Caco-2 (cell line): ENCODE measurements at regions of chr7 and their contacts with region 1.

Region 1: DNA sequence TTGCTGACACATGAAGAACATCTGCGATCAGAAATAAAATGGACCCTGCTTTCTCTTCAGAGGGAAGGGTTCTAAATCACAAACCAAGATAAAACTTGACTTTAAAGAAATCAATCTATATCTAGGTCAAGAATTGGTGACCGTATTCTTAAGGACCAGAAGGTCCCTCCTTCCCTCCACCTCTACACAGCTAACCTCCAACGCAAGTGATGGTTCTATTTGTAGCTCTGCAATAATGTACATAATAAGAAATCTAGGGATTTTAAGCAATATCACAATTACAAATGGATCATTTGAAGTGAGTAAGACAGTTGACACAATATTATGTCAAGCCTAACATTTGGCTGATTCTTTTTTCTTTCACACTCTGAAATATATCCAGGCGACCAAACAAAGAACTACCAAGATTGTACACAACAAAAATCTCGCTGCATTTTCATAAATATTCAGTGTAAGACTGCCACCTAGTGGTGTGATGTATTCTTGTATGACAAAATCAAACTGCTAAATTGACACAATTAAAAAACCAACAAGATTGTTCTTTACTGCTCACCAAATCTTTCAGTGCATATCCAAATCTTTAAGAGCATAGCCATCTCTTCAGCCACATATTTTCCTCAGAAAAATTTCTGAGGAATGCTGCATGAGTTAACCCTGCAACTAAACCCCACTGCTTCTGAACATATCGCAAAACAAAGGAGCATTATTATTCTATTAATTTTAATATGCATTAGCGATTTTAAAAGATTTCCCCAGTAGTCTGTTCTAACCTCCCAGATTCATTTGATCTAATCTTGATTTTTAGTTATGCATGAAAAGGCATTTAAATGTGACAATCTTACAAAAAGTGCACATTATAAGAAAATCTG is 44.5 kb downstream of the ICA1 start:
- DNase-seq: peak in 1 of 2 experiments; percentile 59
- H3K4me3 ChIP-seq: no peak overlapping the region
- H3K4me3 Mint-ChIP-seq: no peak overlapping the region
- H3K27ac Mint-ChIP-seq: no peak overlapping the region
- H3K4me1 ChIP-seq: no peaks in the 10 kb centered on the region
- H3K4me1 Mint-ChIP-seq: peaks cover 4% of the 10 kb centered on the region
- H3K27me3 ChIP-seq: no peaks in the 10 kb centered on the region
- H3K27me3 Mint-ChIP-seq: no peaks in the 10 kb centered on the region
- CTCF ChIP-seq: peak; percentile 52 to 75

Region 2: DNA sequence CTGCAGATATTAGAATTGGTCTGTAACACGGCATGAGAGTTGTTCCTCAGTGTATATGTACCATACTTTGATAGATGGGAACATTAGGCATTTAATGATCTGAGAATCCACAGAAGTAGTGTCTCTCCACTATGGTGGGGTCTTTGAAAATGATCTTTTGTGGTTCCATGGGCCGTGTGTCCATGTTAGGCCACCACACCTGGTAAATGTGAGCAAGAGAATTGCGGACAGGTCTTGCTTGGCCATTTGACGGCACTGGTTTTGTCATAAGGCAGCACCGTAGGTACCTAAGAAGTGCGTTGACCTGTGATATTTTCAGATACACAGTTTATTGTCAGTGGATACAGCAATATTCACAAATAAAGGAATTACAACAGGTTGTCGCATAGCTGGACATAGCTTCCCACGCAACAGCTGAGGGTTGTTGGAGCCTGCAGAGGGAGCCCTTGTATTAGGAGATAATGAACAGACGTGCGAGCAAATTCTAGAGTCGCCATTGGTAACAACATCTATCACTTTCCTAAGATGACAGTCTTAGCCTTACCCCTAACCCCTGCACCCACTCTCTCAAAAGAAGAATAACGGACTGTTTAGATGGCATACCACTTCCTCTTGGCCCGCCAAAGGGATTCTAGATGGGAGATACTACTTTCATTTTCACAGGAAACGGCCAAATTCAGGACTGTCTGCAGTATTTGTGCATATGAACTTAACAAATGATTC is 793.1 kb before region 1 on chr7:
- CTCF ChIA-PET with region 1: no interaction called
- POLR2A ChIA-PET with region 1: no interaction called
- intact Hi-C with region 1: loop called (anchors 1 kb)
- DNase-seq: peak; percentile 62 to 75
- H3K4me3 ChIP-seq: no peak overlapping the region
- H3K4me3 Mint-ChIP-seq: no peak overlapping the region
- H3K27ac Mint-ChIP-seq: no peak overlapping the region
- H3K4me1 ChIP-seq: no peaks in the 10 kb centered on the region
- H3K4me1 Mint-ChIP-seq: no peaks in the 10 kb centered on the region
- H3K27me3 ChIP-seq: no peaks in the 10 kb centered on the region
- H3K27me3 Mint-ChIP-seq: no peaks in the 10 kb centered on the region
- CTCF ChIP-seq: peak; percentile 86 to 93

Region 3: GRCh38 chr7:7566651-7567611 is 650.5 kb before region 1 on chr7 and contains the start of gene MIOS:
- CTCF ChIA-PET with region 1: no interaction called
- POLR2A ChIA-PET with region 1: no interaction called
- intact Hi-C with region 1: loop called (anchors 10 kb)
- DNase-seq: peak; percentile 95 to 97
- H3K4me3 ChIP-seq: peak within 1 kb of the TSS; percentile 53
- H3K4me3 Mint-ChIP-seq: no peak within 1 kb of the TSS
- H3K27ac Mint-ChIP-seq: no peak within 1 kb of the TSS
- H3K4me1 ChIP-seq: peaks cover 34% of the 10 kb centered on the region
- H3K4me1 Mint-ChIP-seq: peaks cover 20% of the 10 kb centered on the region
- H3K27me3 ChIP-seq: no peaks in the 10 kb centered on the region
- H3K27me3 Mint-ChIP-seq: no peaks in the 10 kb centered on the region
- CTCF ChIP-seq: no peak
- total RNA-seq, gene MIOS: 32.1 and 37.3 TPM in 2 replicates

Region 4: DNA sequence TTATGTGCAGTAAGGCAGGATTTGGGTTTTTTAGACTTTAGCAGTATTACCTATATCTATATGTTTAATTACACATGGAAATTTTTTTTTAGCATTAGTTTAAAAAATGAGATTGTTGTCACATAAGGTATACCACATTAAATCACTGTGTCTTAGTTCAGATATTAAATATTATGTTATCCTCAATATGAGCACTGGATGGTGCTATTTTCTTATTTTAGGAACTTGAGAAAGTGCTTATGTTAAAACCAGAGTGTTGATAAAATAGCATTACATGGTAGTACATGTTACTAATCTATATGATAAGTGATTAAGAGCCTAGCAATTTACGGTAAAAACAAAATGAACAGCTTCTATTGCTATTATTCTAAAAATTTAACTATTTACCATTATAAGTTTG is 622.0 kb before region 1 on chr7:
- CTCF ChIA-PET with region 1: no interaction called
- POLR2A ChIA-PET with region 1: no interaction called
- intact Hi-C with region 1: loop called (anchors 1 kb)
- DNase-seq: no peak
- H3K4me3 ChIP-seq: no peak overlapping the region
- H3K4me3 Mint-ChIP-seq: no peak overlapping the region
- H3K27ac Mint-ChIP-seq: no peak overlapping the region
- H3K4me1 ChIP-seq: no peaks in the 10 kb centered on the region
- H3K4me1 Mint-ChIP-seq: no peaks in the 10 kb centered on the region
- H3K27me3 ChIP-seq: no peaks in the 10 kb centered on the region
- H3K27me3 Mint-ChIP-seq: no peaks in the 10 kb centered on the region
- CTCF ChIP-seq: peak in 1 of 2 experiments; percentile 7

Region 5: GRCh38 chr7:8228068-8228467 is 10.6 kb after region 1 on chr7:
- CTCF ChIA-PET with region 1: no interaction called
- POLR2A ChIA-PET with region 1: no interaction called
- intact Hi-C with region 1: no loop called
- DNase-seq: no peak
- H3K4me3 ChIP-seq: no peak overlapping the region
- H3K4me3 Mint-ChIP-seq: no peak overlapping the region
- H3K27ac Mint-ChIP-seq: no peak overlapping the region
- H3K4me1 ChIP-seq: no peaks in the 10 kb centered on the region
- H3K4me1 Mint-ChIP-seq: peaks cover 4% of the 10 kb centered on the region
- H3K27me3 ChIP-seq: no peaks in the 10 kb centered on the region
- H3K27me3 Mint-ChIP-seq: no peaks in the 10 kb centered on the region
- CTCF ChIP-seq: no peak

Region 6: GRCh38 chr7:8261711-8262695 is 44.6 kb after region 1 on chr7 and contains the start of gene ICA1:
- CTCF ChIA-PET with region 1: no interaction called
- POLR2A ChIA-PET with region 1: no interaction called
- intact Hi-C with region 1: loop called (anchors 2 kb)
- DNase-seq: peak; percentile 81 to 87
- H3K4me3 ChIP-seq: peak within 1 kb of the TSS; percentile 91
- H3K4me3 Mint-ChIP-seq: peak within 1 kb of the TSS; percentile 94
- H3K27ac Mint-ChIP-seq: peak within 1 kb of the TSS; percentile 91
- H3K4me1 ChIP-seq: peaks cover 6% of the 10 kb centered on the region; the same call in 1 of the 2 replicates
- H3K4me1 Mint-ChIP-seq: peaks cover 6% of the 10 kb centered on the region
- H3K27me3 ChIP-seq: no peaks in the 10 kb centered on the region
- H3K27me3 Mint-ChIP-seq: no peaks in the 10 kb centered on the region
- CTCF ChIP-seq: no peak
- total RNA-seq, gene ICA1: 30.7 and 34.2 TPM in 2 replicates

Region 7: DNA sequence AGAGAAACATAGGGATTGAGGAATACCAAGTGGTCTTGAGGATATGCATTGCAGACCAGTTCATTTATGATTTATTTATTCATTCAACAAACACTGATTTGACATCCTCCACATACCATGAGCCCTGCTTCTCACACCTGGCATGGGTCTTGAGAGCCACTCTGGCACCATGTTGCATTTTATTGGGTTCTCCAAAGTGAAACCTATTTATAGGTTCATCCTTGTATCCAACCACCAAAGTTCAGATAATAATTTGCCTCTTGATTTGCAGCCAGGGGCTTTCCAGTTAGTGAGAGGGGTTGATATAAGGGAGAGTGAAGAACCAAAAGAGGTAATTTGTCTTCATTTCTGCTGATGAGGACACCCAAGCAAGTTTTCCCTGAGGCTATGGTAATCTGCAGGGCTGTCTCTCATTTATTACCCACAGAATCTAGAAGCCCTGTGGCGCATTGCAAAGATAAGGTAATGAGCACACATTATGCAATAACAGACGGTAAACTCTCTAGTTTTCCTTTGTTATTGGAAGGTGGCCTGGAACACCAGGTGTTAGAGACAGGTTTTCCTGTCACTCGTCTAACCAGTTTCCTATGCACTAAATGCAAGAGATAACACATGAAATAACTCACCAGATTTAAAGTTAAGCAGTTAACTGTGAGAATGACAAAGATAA is 73.3 kb after region 1 on chr7:
- CTCF ChIA-PET with region 1: interaction called, 5 read pairs
- POLR2A ChIA-PET with region 1: no interaction called
- intact Hi-C with region 1: loop called (anchors 1 kb)
- DNase-seq: peak; percentile 80 to 83
- H3K4me3 ChIP-seq: no peak overlapping the region
- H3K4me3 Mint-ChIP-seq: no peak overlapping the region
- H3K27ac Mint-ChIP-seq: no peak overlapping the region
- H3K4me1 ChIP-seq: peaks cover 21% of the 10 kb centered on the region
- H3K4me1 Mint-ChIP-seq: peaks cover 42% of the 10 kb centered on the region
- H3K27me3 ChIP-seq: no peaks in the 10 kb centered on the region
- H3K27me3 Mint-ChIP-seq: no peaks in the 10 kb centered on the region
- CTCF ChIP-seq: no peak